Caco-2 (cell line): ENCODE measurements at regions of chr4 and their contacts with region 1.

Region 1: DNA sequence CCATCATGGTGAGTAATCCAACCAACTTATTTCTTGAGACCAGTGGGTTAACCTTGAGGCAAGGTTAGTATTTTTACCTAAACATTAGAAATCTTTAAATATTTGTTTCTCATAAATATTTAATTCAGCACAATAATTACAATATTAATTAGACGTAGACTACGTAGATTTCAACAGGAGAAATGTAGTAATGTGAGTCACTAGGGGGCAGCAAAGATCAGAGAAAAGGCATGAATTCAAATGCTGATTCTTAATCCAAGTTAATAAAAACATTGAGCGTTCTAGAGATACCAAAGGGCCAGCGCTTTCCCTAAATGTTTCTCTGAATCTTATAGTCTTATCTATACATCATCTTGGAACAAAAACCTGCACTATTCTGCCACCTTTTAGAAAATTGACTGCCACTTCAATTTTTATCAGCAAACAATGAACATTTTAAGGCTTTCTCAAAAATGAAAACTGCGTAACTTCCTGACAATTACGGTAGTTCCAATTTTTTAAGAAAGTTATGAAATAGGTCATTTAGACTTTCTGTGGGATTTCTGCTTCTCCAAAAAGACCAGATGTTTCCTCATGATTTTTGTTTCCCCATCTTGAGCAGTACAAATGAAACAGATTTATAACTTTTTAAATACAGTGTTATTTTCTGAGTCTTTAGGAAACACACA is 180.7 kb downstream of the GASK1B start:
- DNase-seq: peak in 1 of 2 experiments; percentile 52
- H3K4me3 ChIP-seq: no peak overlapping the region
- H3K4me3 Mint-ChIP-seq: peak overlapping the region; percentile 33
- H3K27ac Mint-ChIP-seq: no peak overlapping the region
- H3K4me1 ChIP-seq: peaks cover 39% of the 10 kb centered on the region
- H3K4me1 Mint-ChIP-seq: peaks cover 15% of the 10 kb centered on the region
- H3K27me3 ChIP-seq: no peaks in the 10 kb centered on the region
- H3K27me3 Mint-ChIP-seq: no peaks in the 10 kb centered on the region
- CTCF ChIP-seq: peak; percentile 9 to 27

Region 2: DNA sequence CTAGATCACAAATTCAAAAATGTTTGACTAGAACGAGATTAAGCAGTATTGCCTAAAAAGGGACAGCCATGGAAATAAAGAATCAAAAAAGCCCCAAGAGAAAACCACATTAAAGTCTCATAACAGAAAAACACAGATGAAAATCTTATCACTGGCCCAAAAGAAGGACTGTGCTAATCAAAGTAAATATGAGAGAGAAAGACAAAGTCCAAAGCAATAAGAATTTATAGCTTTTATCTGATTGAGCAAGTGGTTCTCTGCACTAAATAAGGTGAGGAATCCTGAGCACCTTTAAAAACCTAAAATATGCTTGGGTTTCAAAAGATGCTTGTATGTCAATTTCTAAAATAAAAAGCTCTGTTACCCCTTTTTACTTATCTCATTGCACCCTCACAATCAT is 228.7 kb before region 1 on chr4:
- CTCF ChIA-PET with region 1: no interaction called
- POLR2A ChIA-PET with region 1: no interaction called
- intact Hi-C with region 1: no loop called
- DNase-seq: no peak
- H3K4me3 ChIP-seq: no peak overlapping the region
- H3K4me3 Mint-ChIP-seq: peak overlapping the region; percentile 49
- H3K27ac Mint-ChIP-seq: peak overlapping the region; percentile 71
- H3K4me1 ChIP-seq: peaks cover 7% of the 10 kb centered on the region; the same call in 1 of the 2 replicates
- H3K4me1 Mint-ChIP-seq: peaks cover 7% of the 10 kb centered on the region
- H3K27me3 ChIP-seq: no peaks in the 10 kb centered on the region
- H3K27me3 Mint-ChIP-seq: no peaks in the 10 kb centered on the region
- CTCF ChIP-seq: no peak

Region 3: GRCh38 chr4:157898836-157899605 is 93.2 kb before region 1 on chr4:
- CTCF ChIA-PET with region 1: no interaction called
- POLR2A ChIA-PET with region 1: no interaction called
- intact Hi-C with region 1: no loop called
- DNase-seq: no peak
- H3K4me3 ChIP-seq: no peak overlapping the region
- H3K4me3 Mint-ChIP-seq: no peak overlapping the region
- H3K27ac Mint-ChIP-seq: no peak overlapping the region
- H3K4me1 ChIP-seq: no peaks in the 10 kb centered on the region
- H3K4me1 Mint-ChIP-seq: no peaks in the 10 kb centered on the region
- H3K27me3 ChIP-seq: no peaks in the 10 kb centered on the region
- H3K27me3 Mint-ChIP-seq: no peaks in the 10 kb centered on the region
- CTCF ChIP-seq: no peak

Region 4: DNA sequence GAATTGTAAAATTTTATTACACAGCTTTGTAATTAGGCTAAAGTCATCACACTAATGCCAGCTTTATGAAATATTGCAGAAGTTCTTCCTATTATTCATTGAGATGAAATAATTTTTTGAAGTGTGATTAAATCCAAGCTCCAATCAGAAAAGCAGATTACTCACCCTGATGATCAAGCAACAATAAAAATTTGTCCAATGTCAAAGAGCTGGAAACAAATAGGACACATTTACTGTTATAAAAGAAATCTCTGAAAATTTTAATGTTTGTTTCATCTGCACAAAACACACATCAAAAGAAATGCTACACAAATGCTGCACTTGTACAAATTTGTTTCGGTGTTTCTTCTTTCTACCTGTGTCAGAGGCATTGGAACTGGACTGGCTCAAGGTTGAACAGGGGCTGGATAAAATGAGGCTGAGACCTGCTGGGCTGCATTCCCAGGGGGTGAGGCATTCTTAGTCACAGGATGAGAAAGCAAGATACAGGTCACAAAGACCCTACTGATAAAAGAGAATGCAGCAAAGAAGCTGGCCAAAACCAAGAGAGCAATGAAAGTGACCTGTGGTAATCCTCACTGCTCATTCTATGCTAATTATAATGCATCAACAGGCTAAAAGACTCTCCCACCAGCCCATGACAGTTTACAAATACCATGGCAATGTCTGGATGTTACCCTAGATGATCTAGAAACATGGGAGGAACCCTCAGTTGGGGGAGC is 102.4 kb after region 1 on chr4:
- CTCF ChIA-PET with region 1: no interaction called
- POLR2A ChIA-PET with region 1: no interaction called
- intact Hi-C with region 1: loop called (anchors 2 kb)
- DNase-seq: peak; percentile 78 to 80
- H3K4me3 ChIP-seq: no peak overlapping the region
- H3K4me3 Mint-ChIP-seq: peak overlapping the region; percentile 60
- H3K27ac Mint-ChIP-seq: peak overlapping the region; percentile 82
- H3K4me1 ChIP-seq: peaks cover 8% of the 10 kb centered on the region
- H3K4me1 Mint-ChIP-seq: peaks cover 12% of the 10 kb centered on the region
- H3K27me3 ChIP-seq: no peaks in the 10 kb centered on the region
- H3K27me3 Mint-ChIP-seq: no peaks in the 10 kb centered on the region
- CTCF ChIP-seq: no peak

Region 5: GRCh38 chr4:158159054-158159717 is 167.0 kb after region 1 on chr4:
- CTCF ChIA-PET with region 1: no interaction called
- POLR2A ChIA-PET with region 1: no interaction called
- intact Hi-C with region 1: loop called (anchors 1 kb)
- DNase-seq: no peak
- H3K4me3 ChIP-seq: no peak overlapping the region
- H3K4me3 Mint-ChIP-seq: no peak overlapping the region
- H3K27ac Mint-ChIP-seq: no peak overlapping the region
- H3K4me1 ChIP-seq: peaks cover 66% of the 10 kb centered on the region
- H3K4me1 Mint-ChIP-seq: peaks cover 40% of the 10 kb centered on the region
- H3K27me3 ChIP-seq: no peaks in the 10 kb centered on the region
- H3K27me3 Mint-ChIP-seq: no peaks in the 10 kb centered on the region
- CTCF ChIP-seq: no peak

Region 6: GRCh38 chr4:158209825-158210807 is 217.9 kb after region 1 on chr4 and contains the start of gene TMEM144:
- CTCF ChIA-PET with region 1: no interaction called
- POLR2A ChIA-PET with region 1: no interaction called
- intact Hi-C with region 1: loop called (anchors 1 kb)
- DNase-seq: peak; percentile 92 to 95
- H3K4me3 ChIP-seq: peak within 1 kb of the TSS; percentile 37
- H3K4me3 Mint-ChIP-seq: peak within 1 kb of the TSS; percentile 77
- H3K27ac Mint-ChIP-seq: peak within 1 kb of the TSS; percentile 82
- H3K4me1 ChIP-seq: peaks cover 13% of the 10 kb centered on the region
- H3K4me1 Mint-ChIP-seq: peaks cover 7% of the 10 kb centered on the region
- H3K27me3 ChIP-seq: no peaks in the 10 kb centered on the region
- H3K27me3 Mint-ChIP-seq: no peaks in the 10 kb centered on the region
- CTCF ChIP-seq: peak in 1 of 2 experiments; percentile 27
- total RNA-seq, gene TMEM144: 15.5 and 17.9 TPM in 2 replicates